ENCODE measurements at regions of chr3 and their contacts with region 1.

Region 1: GRCh38 chr3:63818281-63819150 is 583 bp upstream of the C3orf49 start:
- DNase-seq: no peak
- ATAC-seq: peak; percentile 77 to 83
- H3K4me3 ChIP-seq: no peak overlapping the region
- H3K27ac ChIP-seq: no peak overlapping the region
- H3K4me1 ChIP-seq: no peaks in the 10 kb centered on the region
- H3K27me3 ChIP-seq: no peaks in the 10 kb centered on the region
- CTCF ChIP-seq: peak; percentile 86

Region 2: DNA sequence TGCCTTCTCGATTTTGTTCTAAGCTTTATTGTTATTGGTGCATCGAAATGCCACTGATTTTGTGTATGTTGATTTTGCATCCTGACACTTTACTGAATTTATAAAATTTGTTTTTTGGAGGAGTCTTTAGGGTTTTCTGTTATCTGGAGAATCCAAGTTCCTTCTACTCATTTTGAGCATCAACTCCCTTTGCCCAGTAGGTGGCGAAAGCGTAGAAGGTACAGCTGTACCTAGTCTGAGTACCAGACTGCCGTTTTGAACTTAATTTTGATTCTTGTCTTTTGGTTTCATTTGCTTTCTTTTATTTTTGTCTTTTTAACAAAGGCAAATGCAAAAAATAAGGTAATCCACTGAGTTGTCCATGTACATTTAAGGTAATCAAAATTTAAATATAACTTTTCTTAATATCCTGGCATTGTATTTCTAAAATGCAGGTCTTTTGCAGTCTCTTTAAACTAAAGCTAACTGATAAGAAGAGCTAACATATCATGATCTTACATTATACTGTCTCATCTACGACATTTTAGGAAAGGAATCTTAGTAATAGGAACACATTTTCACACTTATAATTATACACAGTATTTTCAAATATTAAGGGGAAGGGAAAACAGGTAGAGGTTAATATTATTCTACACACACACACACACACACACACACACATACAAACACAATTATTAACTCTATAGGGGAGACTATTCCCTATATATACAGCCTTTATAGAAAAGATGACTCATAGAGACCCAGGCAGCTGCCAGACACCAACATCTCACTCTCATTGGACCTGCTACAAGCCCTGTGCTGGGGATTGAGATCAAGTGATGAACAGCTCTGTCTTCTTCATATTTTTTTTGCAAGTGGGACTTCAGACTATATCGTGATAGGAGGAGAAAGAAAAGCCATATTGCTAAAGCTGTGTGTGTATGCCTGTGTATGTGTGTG is 468.7 kb before region 1 on chr3:
- intact Hi-C with region 1: loop called (anchors 5 kb)
- DNase-seq: peak; percentile 48
- ATAC-seq: peak; percentile 73 to 76
- H3K4me3 ChIP-seq: no peak overlapping the region
- H3K27ac ChIP-seq: no peak overlapping the region
- H3K4me1 ChIP-seq: no peaks in the 10 kb centered on the region
- H3K27me3 ChIP-seq: peaks cover 3% of the 10 kb centered on the region
- CTCF ChIP-seq: peak; percentile 70

Region 3: GRCh38 chr3:63557912-63558311 is 260.6 kb before region 1 on chr3:
- intact Hi-C with region 1: no loop called
- DNase-seq: no peak
- ATAC-seq: no peak
- H3K4me3 ChIP-seq: no peak overlapping the region
- H3K27ac ChIP-seq: no peak overlapping the region
- H3K4me1 ChIP-seq: no peaks in the 10 kb centered on the region
- H3K27me3 ChIP-seq: no peaks in the 10 kb centered on the region
- CTCF ChIP-seq: no peak